ENCODE measurements at regions of chr22 and their contacts with region 1.

Region 1: GRCh38 chr22:43993027-43993760 is 30.9 kb upstream of the PARVB start:
- DNase-seq: peak; percentile 56 to 80 (median 75)
- H3K4me3 ChIP-seq: no peak overlapping the region
- H3K27ac ChIP-seq: no peak overlapping the region
- H3K4me1 ChIP-seq: peaks cover 0 to 19% (median 13%) of the 10 kb centered on the region in 4 experiments
- H3K27me3 ChIP-seq: no peaks in the 10 kb centered on the region

Region 2: DNA sequence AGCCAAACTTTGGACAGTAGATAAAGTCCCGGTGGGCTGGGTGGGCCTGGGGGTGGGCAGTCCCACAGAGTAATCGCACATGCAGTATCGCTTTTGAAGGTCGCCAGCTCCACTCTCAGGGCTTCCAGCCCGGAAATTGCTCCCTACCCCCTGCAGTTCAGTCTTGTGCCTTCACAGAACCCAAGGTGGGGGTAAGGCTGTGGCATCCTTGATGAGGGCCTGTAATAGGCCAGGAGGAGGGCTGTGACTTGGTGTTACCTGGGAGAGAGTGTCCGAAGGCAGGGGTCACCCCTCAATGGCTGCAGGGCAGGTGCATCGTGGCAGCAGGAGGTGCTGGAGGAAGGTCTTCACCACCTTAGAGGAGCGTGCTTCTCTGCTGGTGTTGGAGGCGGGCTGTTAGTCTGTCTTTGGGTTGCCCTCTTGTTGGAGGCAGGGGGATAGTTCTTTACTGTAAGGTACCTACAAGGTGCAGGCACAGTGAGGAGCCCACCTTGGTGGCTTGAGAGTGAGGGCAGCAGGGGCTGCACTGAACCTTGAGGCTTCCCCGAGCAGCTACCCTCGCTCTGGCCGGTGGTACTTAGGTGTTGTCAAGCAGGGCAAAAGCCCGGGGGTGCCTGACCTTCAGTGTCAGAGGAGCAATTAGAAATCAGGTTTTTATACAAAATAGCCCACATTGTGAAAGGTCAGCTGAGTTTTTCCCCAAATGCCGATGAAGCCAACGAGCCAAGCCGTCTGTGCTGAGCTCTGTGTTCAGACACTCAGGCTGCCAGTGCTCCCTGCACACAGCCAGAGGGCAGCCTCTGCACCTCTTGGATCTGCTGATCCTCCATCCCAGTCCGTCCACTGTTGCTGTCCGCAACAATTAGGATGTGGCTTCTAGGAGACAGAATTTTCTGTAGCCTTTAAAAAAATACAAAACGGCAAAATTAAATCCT is 16.1 kb before region 1 on chr22:
- CTCF ChIA-PET with region 1: interaction called, 10 read pairs
- POLR2A ChIA-PET with region 1: no interaction called
- DNase-seq: no peak
- H3K4me3 ChIP-seq: no peak overlapping the region
- H3K27ac ChIP-seq: no peak overlapping the region
- H3K4me1 ChIP-seq: no peaks in the 10 kb centered on the region
- H3K27me3 ChIP-seq: no peaks in the 10 kb centered on the region

Region 3: GRCh38 chr22:44026630-44027511 is 33.7 kb after region 1 on chr22:
- CTCF ChIA-PET with region 1: interaction called, 12 read pairs
- POLR2A ChIA-PET with region 1: no interaction called
- DNase-seq: peak; percentile 85 to 94 (median 94)
- H3K4me3 ChIP-seq: peak overlapping the region in 6 of 7 experiments; percentile 29 to 75 (median 55)
- H3K27ac ChIP-seq: peak overlapping the region; percentile 85 to 91
- H3K4me1 ChIP-seq: peaks cover 4 to 77% (median 59%) of the 10 kb centered on the region in 4 experiments
- H3K27me3 ChIP-seq: no peaks in the 10 kb centered on the region

Region 4: GRCh38 chr22:44057401-44057987 is 64.3 kb after region 1 on chr22:
- CTCF ChIA-PET with region 1: interaction called, 13 read pairs
- POLR2A ChIA-PET with region 1: no interaction called
- DNase-seq: no peak
- H3K4me3 ChIP-seq: no peak overlapping the region
- H3K27ac ChIP-seq: no peak overlapping the region
- H3K4me1 ChIP-seq: peaks cover 0 to 27% (median 19%) of the 10 kb centered on the region in 4 experiments
- H3K27me3 ChIP-seq: no peaks in the 10 kb centered on the region

Region 5: GRCh38 chr22:44080936-44081861 is 88.0 kb after region 1 on chr22:
- CTCF ChIA-PET with region 1: interaction called, 328 read pairs
- POLR2A ChIA-PET with region 1: interaction called, 5 read pairs
- DNase-seq: peak; percentile 67 to 79 (median 73)
- H3K4me3 ChIP-seq: no peak overlapping the region
- H3K27ac ChIP-seq: no peak overlapping the region
- H3K4me1 ChIP-seq: no peaks in the 10 kb centered on the region
- H3K27me3 ChIP-seq: no peaks in the 10 kb centered on the region

Region 6: GRCh38 chr22:44147821-44148574 is 154.8 kb after region 1 on chr22:
- CTCF ChIA-PET with region 1: no interaction called
- POLR2A ChIA-PET with region 1: no interaction called
- DNase-seq: no peak
- H3K4me3 ChIP-seq: no peak overlapping the region
- H3K27ac ChIP-seq: no peak overlapping the region
- H3K4me1 ChIP-seq: no peaks in the 10 kb centered on the region
- H3K27me3 ChIP-seq: no peaks in the 10 kb centered on the region

Measured in common myeloid progenitor, CD34-positive (primary cell).